Activated CD4-positive, alpha-beta memory T cell treated with anti-CD3 and anti-CD28 coated beads for 36 hours (primary cell): ENCODE measurements at regions of chr1 and their contacts with region 1.

Region 1: DNA sequence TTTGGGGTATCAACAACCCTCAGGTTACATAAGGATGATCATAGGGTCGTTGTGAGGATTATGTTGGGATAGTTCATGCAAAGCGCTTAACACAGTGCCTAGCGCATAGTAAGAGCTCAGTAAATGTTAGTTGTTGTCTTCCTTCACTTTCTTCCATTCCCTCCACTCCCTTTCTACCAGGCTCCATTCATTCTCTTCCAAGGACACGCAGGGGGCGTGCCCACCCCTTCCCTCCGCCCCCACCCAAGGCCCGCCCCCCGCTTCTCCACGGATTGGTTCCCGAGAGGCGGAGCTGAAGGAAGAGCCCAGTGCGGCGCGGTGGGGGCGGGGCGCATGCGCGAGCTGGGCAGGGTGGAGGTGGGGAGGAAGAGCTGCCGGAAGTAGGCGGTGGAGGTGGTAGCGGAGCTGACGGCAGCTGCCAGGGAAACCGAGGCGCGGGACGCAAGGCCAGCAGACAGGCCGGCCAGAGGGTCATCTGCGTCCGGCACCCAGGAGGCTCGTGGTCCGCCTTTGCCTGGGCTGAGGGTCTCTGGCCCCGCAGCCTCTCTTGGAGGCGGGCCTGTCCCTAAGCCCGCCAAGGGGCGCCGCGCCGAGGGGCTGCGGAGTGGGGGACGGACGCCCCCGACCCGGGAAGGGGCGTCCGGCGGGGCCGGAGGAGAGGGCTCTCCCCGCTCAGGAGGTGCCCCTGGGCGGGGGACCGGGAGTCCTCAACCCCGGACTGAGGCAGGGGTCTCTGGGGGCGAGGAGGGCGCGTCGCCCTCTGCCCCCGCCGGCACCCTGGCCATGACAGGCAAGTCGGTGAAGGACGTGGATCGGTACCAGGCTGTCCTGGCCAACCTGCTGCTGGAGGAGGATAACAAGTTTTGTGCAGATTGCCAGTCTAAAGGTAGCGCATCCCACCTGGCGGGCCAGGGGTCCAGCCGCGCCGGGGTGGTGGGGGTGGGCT is at the start of gene SMAP2:
- DNase-seq: peak; percentile 98
- H3K4me3 Mint-ChIP-seq: peak within 1 kb of the TSS; percentile 97
- H3K27ac Mint-ChIP-seq: peak within 1 kb of the TSS; percentile 99
- H3K4me1 Mint-ChIP-seq: peaks cover 44% of the 10 kb centered on the region
- H3K27me3 Mint-ChIP-seq: peaks cover 1% of the 10 kb centered on the region
- total RNA-seq, gene SMAP2: 250 to 254 TPM

Region 2: DNA sequence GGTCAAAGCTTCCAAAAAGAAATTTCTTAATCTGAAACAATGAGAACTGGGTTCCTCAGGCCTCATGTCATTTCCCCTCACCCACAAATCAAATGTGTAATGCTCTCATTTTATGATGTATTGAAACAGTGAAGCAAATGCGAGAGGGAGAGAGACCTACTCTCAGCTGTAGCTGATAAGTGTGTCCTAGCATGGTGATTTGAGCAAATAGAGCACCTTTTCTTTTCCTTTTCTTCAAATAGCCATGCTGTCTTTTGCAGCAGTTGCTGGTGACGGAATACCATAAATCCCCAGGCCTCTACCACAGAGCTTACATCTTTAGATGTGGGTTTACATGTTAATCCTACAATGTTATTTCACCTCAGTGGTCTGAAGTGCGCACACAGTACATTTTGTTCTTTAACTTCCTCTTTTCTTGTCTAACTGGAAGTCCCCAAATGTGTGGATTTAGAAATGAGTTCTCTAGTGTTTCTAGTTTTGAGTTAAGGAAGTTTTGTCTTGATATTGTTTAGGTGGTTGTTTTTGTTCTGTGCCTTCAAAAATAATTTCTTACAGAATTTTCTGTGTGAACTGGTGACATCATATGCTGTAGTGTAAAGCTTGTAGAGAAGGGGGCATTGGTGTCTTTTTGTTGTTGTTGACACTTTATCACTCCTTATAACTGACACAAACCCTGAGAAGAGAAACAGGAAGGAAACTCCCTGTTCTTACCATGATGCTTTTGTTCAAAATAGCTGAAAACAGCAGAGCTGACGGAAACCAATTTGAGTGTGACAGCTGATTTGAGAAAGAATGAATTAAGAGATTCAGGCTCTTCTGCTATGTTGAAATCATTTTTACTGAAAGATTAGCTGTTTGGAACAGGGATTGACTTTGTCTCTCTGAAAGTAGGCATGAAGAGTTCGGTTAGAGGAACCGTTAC is 12.1 kb after region 1 on chr1:
- CTCF ChIA-PET with region 1: interaction called, 24 read pairs
- POLR2A ChIA-PET with region 1: interaction called, 176 read pairs
- intact Hi-C with region 1: loop called (anchors 1 kb)
- DNase-seq: peak; percentile 77
- H3K4me3 Mint-ChIP-seq: peak overlapping the region; percentile 81
- H3K27ac Mint-ChIP-seq: peak overlapping the region; percentile 100
- H3K4me1 Mint-ChIP-seq: peaks cover 90% of the 10 kb centered on the region
- H3K27me3 Mint-ChIP-seq: no peaks in the 10 kb centered on the region

Region 3: GRCh38 chr1:40392221-40392620 is 18.6 kb after region 1 on chr1:
- CTCF ChIA-PET with region 1: interaction called, 16 read pairs
- POLR2A ChIA-PET with region 1: interaction called, 176 read pairs
- intact Hi-C with region 1: no loop called
- DNase-seq: no peak
- H3K4me3 Mint-ChIP-seq: no peak overlapping the region
- H3K27ac Mint-ChIP-seq: peak overlapping the region; percentile 85
- H3K4me1 Mint-ChIP-seq: peaks cover 92% of the 10 kb centered on the region
- H3K27me3 Mint-ChIP-seq: no peaks in the 10 kb centered on the region